Lower leg skin (tissue), 4 donors: ENCODE measurements at regions of chr3 and their contacts with region 1.

Region 1: DNA sequence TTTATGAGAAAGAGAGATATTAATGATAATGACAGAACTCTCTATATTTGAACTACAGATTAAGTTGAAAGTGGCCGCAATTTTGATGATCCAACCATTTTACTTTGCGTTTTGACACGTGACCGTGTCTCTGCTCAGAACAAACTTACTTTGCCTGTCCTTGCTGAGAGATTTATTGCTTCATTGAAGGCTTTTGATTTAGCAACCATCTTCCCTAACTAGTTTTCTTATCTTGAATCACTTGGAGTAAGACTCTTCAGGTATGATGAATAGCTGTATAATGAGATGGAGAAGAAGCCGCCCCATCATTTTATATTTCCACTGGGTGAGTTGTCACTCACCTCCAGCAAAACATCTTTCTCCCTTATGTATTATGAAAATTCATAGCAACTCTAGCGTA is 8.1 kb upstream of the SPTSSB start:
- DNase-seq: no peak
- H3K4me3 ChIP-seq: no peak overlapping the region
- CTCF ChIP-seq: no peak
- POLR2A ChIP-seq: no peak

Region 2: GRCh38 chr3:160981217-160981938 is 398.0 kb before region 1 on chr3:
- intact Hi-C with region 1: no loop called
- DNase-seq: peak in 1 of 2 donors; percentile 24
- H3K4me3 ChIP-seq: no peak overlapping the region
- CTCF ChIP-seq: no peak
- POLR2A ChIP-seq: no peak

Region 3: DNA sequence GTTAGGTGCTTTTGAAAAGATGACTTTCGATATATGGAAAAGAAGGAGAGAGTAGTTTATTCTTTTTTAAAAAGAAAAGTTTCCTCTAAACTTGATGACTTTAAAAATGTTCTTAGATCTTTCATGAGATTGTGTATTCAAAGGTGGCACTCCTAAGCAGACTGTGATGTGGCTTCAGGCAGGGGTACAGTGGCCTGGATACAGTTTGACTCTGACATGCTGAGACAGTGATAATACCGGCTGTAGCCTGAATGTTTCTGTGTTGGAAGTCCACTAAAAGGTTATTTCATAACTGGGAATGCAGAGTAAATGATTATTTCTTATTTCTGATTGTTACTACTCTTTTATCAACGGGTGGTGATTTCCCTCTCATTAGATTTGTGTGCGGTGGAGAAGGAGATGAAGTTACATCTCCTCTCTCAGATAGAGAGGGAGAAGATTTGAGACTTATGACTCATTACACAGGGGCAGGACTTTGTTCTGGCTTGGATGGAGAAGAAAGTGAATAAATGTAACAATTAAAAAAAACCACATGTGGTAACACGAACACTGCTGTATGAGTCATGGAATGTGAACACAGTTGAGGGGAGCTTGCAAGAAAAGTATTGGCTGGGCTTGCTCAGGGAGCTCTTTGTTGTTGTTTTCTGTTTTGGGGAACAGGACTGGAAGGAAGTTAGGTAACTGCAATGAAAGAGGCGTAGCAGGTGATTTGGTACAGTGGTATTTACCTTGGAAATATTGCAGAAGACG is 29.7 kb before region 1 on chr3:
- intact Hi-C with region 1: no loop called
- DNase-seq: peak in 1 of 2 donors; percentile 65
- H3K4me3 ChIP-seq: no peak overlapping the region
- CTCF ChIP-seq: no peak
- POLR2A ChIP-seq: no peak

Region 4: GRCh38 chr3:163266731-163267130 is 1887.3 kb after region 1 on chr3:
- intact Hi-C with region 1: loop called (anchors 5 kb)
- DNase-seq: no peak
- H3K4me3 ChIP-seq: no peak overlapping the region
- CTCF ChIP-seq: no peak
- POLR2A ChIP-seq: no peak